ENCODE measurements at regions of chr11 and their contacts with region 1.

Region 1: DNA sequence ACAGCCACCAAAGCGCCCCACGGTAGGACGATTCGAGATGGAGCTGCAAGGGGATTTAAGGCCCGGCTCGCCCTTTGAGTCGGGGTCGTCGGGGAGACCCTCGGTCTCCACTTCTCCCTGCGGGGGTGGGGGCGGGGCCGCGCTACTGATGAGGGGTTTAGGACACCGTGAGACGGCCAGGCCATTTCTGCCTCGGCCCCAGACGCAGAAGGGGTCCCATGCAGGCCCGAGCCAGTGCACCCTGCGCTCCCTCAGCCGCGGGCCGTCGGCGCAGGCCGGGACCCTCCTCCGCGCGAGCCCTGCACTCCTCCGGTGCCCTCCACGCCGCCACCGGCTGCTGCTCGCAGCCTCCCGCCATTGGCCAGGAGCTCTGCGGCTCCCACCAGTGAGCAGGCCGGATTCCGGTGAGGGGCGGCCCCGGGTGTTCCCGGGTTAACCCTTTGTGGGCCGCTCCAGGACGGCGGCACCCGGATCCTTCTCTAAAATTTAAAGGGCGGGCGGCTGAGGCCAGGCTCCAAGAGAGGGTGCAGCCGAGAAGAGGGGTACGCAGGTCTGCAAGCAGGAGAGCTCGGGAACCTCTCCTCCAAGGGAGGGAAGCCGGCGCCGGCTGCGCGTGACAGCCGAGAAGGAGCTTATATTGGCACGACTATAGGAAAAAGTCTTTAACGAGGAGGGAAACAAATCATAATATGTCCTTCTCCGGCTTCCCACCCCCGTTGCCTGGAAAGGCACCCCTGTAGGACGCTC is 18.0 kb downstream of the CREB3L1 start:
- DNase-seq: peak; percentile 73
- ATAC-seq: peak; percentile 98
- H3K4me3 Mint-ChIP-seq: peak overlapping the region; percentile 72
- H3K27ac Mint-ChIP-seq: no peak overlapping the region
- H3K4me1 Mint-ChIP-seq: peaks cover 12% of the 10 kb centered on the region
- H3K27me3 Mint-ChIP-seq: peaks cover 8% of the 10 kb centered on the region
- CTCF ChIP-seq: peak; percentile 19

Region 2: GRCh38 chr11:46278387-46279125 is 16.9 kb before region 1 on chr11:
- CTCF ChIA-PET with region 1: interaction called, 12 read pairs
- POLR2A ChIA-PET with region 1: no interaction called
- intact Hi-C with region 1: no loop called
- DNase-seq: peak; percentile 64
- ATAC-seq: peak; percentile 74
- H3K4me3 Mint-ChIP-seq: peak overlapping the region; percentile 7
- H3K27ac Mint-ChIP-seq: no peak overlapping the region
- H3K4me1 Mint-ChIP-seq: peaks cover 4% of the 10 kb centered on the region
- H3K27me3 Mint-ChIP-seq: peaks cover 33% of the 10 kb centered on the region
- CTCF ChIP-seq: peak; percentile 55